ENCODE measurements at regions of chr12 and their contacts with region 1.

Region 1: DNA sequence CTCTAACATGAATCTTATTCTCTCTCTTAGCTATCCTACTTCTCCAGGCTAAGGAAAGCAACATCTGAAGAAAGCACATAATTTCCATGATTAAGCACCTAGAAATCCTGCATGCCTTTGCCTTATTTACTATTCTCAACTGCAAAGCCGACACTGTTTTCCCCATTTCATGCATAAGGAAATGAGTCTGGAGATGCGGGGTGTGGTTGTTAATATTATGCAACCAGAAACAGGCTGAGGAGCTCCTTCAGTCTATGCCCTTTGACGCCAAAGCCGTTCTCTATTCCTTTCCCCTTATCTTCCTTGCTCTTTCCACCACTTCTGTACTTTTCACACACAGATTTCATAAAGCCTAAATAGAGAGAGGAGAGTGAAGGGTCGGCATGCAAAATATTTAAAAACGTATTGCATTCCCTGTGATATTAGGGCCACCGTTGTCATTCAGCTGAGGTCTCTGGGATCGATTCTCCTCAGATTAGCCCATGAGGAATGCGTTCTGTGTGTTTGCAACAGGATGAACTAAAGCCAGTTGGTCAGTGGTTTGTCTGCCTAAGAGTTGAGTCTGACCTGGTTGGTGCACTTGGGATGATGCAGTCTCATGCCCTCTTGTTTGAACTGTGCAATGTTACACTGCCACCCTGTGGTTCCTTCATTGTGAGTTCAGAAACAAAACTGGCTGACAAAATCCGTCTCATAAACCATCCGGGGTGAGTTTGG is 53.1 kb upstream of the PLEKHG7 start:
- DNase-seq: peak in 1 of 2 donors; percentile 59
- H3K4me3 ChIP-seq: no peak overlapping the region
- CTCF ChIP-seq: peak in 1 of 3 donors; percentile 48
- POLR2A ChIP-seq: no peak

Region 2: DNA sequence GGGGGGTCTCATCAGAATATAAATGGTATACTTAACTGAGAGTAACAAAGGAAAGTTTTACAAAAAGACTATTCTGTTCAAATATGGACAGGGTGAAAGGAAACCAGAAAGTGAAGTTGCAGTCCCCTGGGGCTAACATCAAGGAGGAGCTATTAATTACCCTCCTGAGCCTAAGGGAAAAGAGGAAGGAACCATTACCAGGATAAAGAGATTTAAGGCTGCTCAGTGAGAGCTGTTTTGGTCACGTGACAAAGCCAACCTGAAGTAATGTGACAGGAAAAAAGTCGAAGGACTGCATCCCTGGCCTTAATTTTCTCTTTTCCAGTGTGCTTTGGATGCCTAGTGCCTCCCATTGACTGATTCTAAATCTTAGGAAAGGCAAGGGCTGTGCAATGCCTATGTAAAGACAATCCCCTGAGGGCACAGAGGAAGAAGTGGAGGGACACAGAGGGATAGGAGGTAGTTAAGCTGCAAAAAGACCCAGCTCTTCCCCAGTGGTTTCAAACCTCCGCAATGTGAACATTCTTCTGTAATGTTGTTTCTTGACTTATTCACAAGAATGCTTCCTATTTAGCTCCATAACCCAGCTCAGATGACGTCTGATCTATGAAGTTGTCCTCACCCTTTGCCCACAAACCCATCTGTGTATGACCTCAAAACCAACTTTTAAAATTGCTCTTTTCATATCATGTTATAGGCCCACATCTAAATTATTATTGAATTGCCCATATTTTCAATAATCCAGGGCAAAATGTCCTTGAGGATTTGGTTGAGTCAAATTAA is 1279.4 kb before region 1 on chr12:
- intact Hi-C with region 1: loop called (anchors 10 kb)
- DNase-seq: no peak
- H3K4me3 ChIP-seq: no peak overlapping the region
- CTCF ChIP-seq: no peak
- POLR2A ChIP-seq: no peak

Region 3: DNA sequence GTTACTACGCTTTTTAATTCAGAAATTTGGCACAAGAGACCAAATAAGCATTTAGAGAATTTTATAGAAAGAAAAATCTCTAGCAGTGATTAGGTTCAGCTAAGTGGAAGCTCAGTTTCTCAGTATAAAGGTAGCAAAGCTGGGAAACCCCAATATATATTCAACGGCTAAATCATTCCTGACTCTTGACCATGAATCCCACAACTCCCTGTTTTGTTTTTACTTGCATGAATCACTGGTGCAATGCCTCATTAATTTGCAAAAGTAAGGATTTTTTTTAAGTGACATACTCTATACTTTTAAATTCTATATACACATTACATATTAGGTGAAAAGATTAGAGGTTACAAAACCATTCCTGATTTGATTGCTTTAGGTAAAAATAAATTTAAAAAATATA is 21.2 kb before region 1 on chr12:
- intact Hi-C with region 1: loop called (anchors 1 kb)
- DNase-seq: no peak
- H3K4me3 ChIP-seq: no peak overlapping the region
- CTCF ChIP-seq: no peak
- POLR2A ChIP-seq: no peak

Region 4: DNA sequence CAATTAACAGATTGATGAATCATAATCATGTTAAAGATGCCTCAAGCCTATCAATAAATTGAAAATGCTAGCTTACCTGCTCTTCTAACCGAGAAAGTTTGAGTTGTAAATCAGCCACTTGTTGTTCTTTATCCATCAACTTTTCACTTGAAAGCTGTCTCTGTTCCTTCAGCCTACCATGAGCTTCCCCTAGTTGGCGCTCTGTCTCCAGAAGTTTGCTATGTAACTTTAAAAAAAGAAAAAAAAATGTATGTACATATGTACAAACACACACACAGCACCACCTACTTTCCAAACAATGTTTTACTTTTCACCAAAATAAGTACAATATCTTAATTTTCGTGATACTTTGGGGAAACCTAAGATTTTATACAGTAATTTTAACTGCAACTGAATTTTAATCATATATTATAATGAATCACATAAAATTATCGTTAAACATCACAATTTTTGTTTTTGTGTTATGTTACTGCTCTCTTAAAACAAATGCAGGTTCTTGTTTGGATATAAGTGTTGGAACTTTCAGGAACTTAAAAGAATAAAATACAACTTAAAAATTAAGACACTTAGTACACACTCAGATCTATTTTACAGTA is 178.3 kb after region 1 on chr12:
- intact Hi-C with region 1: no loop called
- DNase-seq: no peak
- H3K4me3 ChIP-seq: no peak overlapping the region
- CTCF ChIP-seq: no peak
- POLR2A ChIP-seq: no peak

Region 5: DNA sequence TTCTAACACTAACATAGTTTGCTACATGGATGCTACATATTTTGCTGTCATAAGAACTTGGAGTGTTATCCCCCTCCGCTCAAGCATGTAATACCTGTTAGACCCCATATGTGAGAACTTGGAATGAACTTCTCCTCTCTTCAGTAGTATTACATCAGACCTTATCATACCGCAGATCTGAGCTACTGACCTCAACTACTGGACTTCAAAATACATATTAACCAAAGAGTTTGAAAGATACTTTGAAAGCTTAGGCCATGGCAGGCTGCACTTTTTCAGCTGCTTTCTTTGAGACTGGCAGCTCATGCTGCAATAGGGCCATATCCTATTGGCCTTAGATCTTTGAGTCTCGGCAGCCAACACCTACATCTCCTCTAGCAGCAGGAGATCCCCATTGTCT is 204.7 kb after region 1 on chr12:
- intact Hi-C with region 1: no loop called
- DNase-seq: no peak
- H3K4me3 ChIP-seq: no peak overlapping the region
- CTCF ChIP-seq: no peak
- POLR2A ChIP-seq: no peak